Activated CD4-positive, alpha-beta memory T cell treated with anti-CD3 and anti-CD28 coated beads, Interleukin-2, amount 10 ng/mL, durations not matched to agents 7 days and 5 days (primary cell): ENCODE measurements at regions of chr12 and their contacts with region 1.

Region 1: GRCh38 chr12:50111693-50112455 is at the start of gene COX14:
- DNase-seq: peak; percentile 99
- H3K4me3 Mint-ChIP-seq: peak within 1 kb of the TSS; percentile 93
- H3K27ac Mint-ChIP-seq: peak within 1 kb of the TSS; percentile 96
- H3K4me1 Mint-ChIP-seq: peaks cover 44% of the 10 kb centered on the region
- H3K27me3 Mint-ChIP-seq: no peaks in the 10 kb centered on the region
- total RNA-seq, gene COX14: 53.5 to 55.3 TPM

Region 2: DNA sequence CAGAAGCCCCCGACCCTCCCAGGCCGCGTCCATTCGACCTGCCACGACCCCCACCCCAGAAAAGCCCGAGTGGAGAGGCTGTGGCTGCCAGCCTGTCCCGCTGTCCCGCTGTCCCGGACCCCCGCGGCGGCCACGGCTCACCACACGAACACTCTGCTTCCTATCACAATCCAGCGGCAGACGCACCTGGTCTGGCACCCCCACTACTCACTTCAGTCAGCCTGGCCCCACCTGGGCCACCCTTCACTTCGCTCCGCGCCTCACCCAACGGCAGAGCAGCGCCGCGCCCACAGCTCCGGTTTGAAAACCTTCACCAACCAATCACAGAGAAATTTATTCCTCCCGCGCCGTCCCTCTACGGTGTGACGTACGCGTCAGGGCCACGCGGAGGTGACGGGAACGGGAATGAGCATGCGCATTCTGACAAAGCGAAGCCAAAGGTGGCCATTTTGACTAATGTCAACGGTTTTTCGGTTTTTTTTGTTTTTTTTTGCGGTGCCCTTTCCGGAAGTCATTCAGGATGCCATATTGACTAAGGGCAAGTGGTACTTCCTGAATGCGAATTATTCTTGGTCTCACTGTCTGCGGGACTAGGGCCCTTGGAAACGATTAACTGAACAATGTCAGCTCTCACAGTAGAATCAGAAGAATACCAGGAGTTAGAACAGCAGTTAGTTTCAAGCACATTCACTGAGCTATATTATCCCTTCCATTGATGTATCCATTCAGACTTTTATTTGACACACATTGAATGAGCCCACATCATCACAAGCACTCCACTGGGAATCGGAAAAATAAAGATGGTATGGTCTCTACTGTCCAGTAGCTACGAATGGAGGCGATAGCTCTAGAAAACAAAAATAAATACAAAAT is 86.5 kb before region 1 on chr12 and contains the start of gene RACGAP1:
- CTCF ChIA-PET with region 1: interaction called, 17 read pairs
- POLR2A ChIA-PET with region 1: interaction called, 12 read pairs
- DNase-seq: peak; percentile 98
- H3K4me3 Mint-ChIP-seq: peak within 1 kb of the TSS; percentile 94
- H3K27ac Mint-ChIP-seq: peak within 1 kb of the TSS; percentile 96
- H3K4me1 Mint-ChIP-seq: peaks cover 44% of the 10 kb centered on the region
- H3K27me3 Mint-ChIP-seq: peaks cover 2% of the 10 kb centered on the region
- total RNA-seq, gene RACGAP1: 172 to 179 TPM

Region 3: GRCh38 chr12:50127546-50127945 is 15.7 kb after region 1 on chr12:
- CTCF ChIA-PET with region 1: interaction called, 36 read pairs
- POLR2A ChIA-PET with region 1: interaction called, 39 read pairs
- DNase-seq: no peak
- H3K4me3 Mint-ChIP-seq: no peak overlapping the region
- H3K27ac Mint-ChIP-seq: no peak overlapping the region
- H3K4me1 Mint-ChIP-seq: peaks cover 14% of the 10 kb centered on the region
- H3K27me3 Mint-ChIP-seq: no peaks in the 10 kb centered on the region

Region 4: GRCh38 chr12:50162230-50162629 is 50.4 kb after region 1 on chr12:
- CTCF ChIA-PET with region 1: interaction called, 55 read pairs
- POLR2A ChIA-PET with region 1: interaction called, 60 read pairs
- DNase-seq: no peak
- H3K4me3 Mint-ChIP-seq: no peak overlapping the region
- H3K27ac Mint-ChIP-seq: no peak overlapping the region
- H3K4me1 Mint-ChIP-seq: peaks cover 40% of the 10 kb centered on the region
- H3K27me3 Mint-ChIP-seq: no peaks in the 10 kb centered on the region

Region 5: DNA sequence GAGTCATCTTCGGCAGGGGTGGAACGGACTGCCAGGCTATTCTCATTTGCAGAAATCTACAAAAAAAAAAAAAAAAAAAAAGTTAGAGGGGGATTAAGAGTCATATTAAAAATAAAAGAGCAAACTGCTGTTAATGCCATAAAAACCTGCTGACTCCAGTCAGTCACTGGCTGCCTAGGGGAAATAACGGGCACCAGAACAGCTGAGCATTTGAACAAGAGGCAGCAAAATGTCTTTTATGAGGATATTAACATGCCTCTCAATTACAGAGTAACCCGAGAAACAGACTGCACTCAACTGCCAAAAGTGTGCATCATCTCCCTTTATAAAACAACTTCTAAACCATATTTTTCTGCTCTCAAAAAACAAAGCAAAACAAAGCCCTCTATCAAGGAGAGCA is 84.0 kb after region 1 on chr12:
- CTCF ChIA-PET with region 1: interaction called, 10 read pairs
- POLR2A ChIA-PET with region 1: interaction called, 4 read pairs
- DNase-seq: no peak
- H3K4me3 Mint-ChIP-seq: no peak overlapping the region
- H3K27ac Mint-ChIP-seq: no peak overlapping the region
- H3K4me1 Mint-ChIP-seq: peaks cover 5% of the 10 kb centered on the region
- H3K27me3 Mint-ChIP-seq: no peaks in the 10 kb centered on the region

Region 6: GRCh38 chr12:50283229-50283923 is 171.5 kb after region 1 on chr12 and contains the start of gene LIMA1:
- CTCF ChIA-PET with region 1: interaction called, 22 read pairs
- POLR2A ChIA-PET with region 1: interaction called, 15 read pairs
- DNase-seq: peak; percentile 93
- H3K4me3 Mint-ChIP-seq: peak within 1 kb of the TSS; percentile 89
- H3K27ac Mint-ChIP-seq: peak within 1 kb of the TSS; percentile 70
- H3K4me1 Mint-ChIP-seq: peaks cover 26% of the 10 kb centered on the region
- H3K27me3 Mint-ChIP-seq: peaks cover 13% of the 10 kb centered on the region
- total RNA-seq, gene LIMA1: 59.4 to 59.9 TPM